Calu3 (cell line): ENCODE measurements at regions of chr6 and their contacts with region 1.

Region 1: GRCh38 chr6:138575257-138575656 is 76.0 kb upstream of the NHSL1 start:
- DNase-seq: no peak
- H3K4me3 Mint-ChIP-seq: no peak overlapping the region
- H3K27ac Mint-ChIP-seq: no peak overlapping the region
- H3K4me1 Mint-ChIP-seq: peaks cover 8% of the 10 kb centered on the region
- H3K27me3 Mint-ChIP-seq: no peaks in the 10 kb centered on the region
- CTCF ChIP-seq: no peak

Region 2: DNA sequence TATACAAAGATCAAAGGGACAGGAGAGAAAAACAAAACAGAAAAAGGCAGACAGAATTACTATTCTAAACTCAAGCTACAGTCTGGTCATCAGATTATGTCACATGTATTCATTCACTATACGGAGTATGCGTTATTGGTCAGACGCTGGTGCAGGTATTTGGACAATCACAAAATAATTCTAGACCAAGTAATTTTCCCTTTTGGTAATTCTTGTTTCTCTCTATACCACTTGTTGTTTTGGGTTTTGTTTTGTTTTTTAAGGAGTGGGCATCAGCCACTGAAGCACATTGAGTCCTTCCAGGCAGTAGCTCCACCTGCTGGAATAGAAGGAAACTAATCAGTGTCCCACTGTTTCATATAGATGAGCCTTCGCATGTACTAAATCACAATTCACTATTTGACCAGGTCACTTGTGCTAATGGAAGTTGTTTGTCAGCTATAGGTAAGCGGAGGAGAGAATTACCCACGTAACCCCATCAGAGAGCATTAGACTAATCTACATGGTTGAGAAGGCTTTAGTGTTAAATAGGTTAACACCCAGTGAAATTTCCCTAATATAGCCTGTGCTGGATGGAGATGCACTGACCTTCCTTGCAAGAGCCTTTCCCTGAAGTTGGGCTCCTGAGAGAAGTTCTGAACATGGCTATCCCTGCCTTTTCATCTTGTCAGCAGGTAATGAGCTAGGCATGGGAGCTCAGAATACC is 630.3 kb before region 1 on chr6:
- CTCF ChIA-PET with region 1: no interaction called
- intact Hi-C with region 1: no loop called
- DNase-seq: no peak
- H3K4me3 Mint-ChIP-seq: no peak overlapping the region
- H3K27ac Mint-ChIP-seq: no peak overlapping the region
- H3K4me1 Mint-ChIP-seq: no peaks in the 10 kb centered on the region
- H3K27me3 Mint-ChIP-seq: no peaks in the 10 kb centered on the region
- CTCF ChIP-seq: peak; percentile 58

Region 3: DNA sequence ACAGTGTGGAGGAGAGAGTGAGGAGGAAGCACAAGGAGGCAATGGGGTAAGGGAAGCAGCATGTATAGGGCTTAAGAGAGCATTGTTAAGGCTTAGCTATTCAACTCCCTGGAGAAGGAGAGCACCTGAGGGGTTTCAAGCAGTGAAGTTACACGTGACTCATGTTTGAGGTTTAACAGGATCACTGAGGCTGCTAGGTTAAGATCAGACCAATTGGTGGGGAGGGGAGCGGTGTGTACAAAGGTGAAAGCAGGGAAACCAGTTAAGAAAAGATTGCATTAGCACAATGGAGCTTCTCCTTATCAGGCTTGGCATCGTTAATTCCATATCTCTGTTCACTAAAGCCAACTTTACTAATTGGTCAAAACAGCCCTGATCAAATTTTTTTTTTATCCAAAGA is 11.6 kb before region 1 on chr6:
- CTCF ChIA-PET with region 1: no interaction called
- intact Hi-C with region 1: loop called (anchors 1 kb)
- DNase-seq: no peak
- H3K4me3 Mint-ChIP-seq: no peak overlapping the region
- H3K27ac Mint-ChIP-seq: no peak overlapping the region
- H3K4me1 Mint-ChIP-seq: peaks cover 13% of the 10 kb centered on the region
- H3K27me3 Mint-ChIP-seq: no peaks in the 10 kb centered on the region
- CTCF ChIP-seq: no peak